Right ventricle myocardium superior (tissue), 1 donor: ENCODE measurements at regions of chrX and their contacts with region 1.

Region 1: GRCh38 chrX:21479695-21480270 is 105.6 kb downstream of the CNKSR2 start:
- DNase-seq: no peak
- ATAC-seq: peak; percentile 51

Region 2: GRCh38 chrX:20530406-20530921 is 949.3 kb before region 1 on chrX:
- intact Hi-C with region 1: loop called (anchors 10 kb)
- DNase-seq: no peak
- ATAC-seq: peak; percentile 79

Region 3: DNA sequence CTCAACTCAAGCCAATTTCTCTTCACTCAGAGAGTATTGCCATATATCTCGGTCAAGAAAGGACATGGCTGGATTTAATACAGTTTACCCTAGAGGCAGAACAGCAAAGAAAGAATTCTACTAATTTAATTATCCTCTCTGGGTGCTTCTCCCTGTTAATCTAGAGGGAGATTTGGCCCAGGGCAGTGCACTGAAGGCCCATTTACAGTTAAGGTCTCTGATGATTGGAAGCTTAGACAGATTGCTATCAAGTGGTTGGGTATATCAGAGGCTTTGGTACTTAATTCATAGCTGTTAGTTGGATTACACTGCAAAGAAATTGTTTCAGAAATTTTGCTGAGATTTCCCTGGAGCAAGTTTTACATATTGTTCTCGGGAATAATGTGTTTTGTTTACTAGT is 110.2 kb before region 1 on chrX:
- intact Hi-C with region 1: no loop called
- DNase-seq: no peak
- ATAC-seq: no peak

Region 4: DNA sequence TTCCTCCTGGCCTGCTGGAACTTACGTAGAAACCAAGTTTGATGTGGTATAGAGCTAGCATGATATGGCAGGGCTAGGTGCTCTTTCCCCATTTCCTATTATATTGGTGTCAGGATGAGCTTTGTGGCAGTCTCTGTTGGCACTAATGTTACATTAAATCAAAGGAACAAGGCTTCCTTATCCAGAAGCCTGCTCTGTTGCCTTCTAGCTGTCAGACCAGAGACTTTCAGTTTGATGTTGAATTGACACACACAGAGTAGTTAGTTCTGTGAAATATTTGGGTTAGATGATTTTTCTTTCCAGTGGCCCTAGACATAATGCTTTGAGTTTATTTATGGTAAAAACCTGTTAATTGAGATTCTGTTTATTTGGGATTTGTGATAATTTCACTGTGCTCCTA is 95.6 kb before region 1 on chrX:
- intact Hi-C with region 1: no loop called
- DNase-seq: no peak
- ATAC-seq: no peak